Psoas muscle (tissue), 8 donors: ENCODE measurements at regions of chr2 and their contacts with region 1.

Region 1: GRCh38 chr2:48248241-48248933 is 281.6 kb upstream of the STON1 start:
- DNase-seq: no peak
- ATAC-seq: peak; percentile 90 to 94 (median 92)
- H3K4me3 ChIP-seq: no peak overlapping the region
- H3K27ac ChIP-seq: peak overlapping the region; percentile 84
- H3K4me1 ChIP-seq: peaks cover 34% of the 10 kb centered on the region
- H3K27me3 ChIP-seq: no peaks in the 10 kb centered on the region
- CTCF ChIP-seq: no peak

Region 2: GRCh38 chr2:47520825-47521665 is 727.3 kb before region 1 on chr2:
- intact Hi-C with region 1: no loop called
- DNase-seq: peak; percentile 33 to 59
- ATAC-seq: peak; percentile 47 to 68 (median 60)
- H3K4me3 ChIP-seq: peak overlapping the region; percentile 63
- H3K27ac ChIP-seq: no peak overlapping the region
- H3K4me1 ChIP-seq: peaks cover 4% of the 10 kb centered on the region
- H3K27me3 ChIP-seq: peaks cover 0 to 11% (median 2%) of the 10 kb centered on the region in 3 donors
- CTCF ChIP-seq: no peak

Region 3: DNA sequence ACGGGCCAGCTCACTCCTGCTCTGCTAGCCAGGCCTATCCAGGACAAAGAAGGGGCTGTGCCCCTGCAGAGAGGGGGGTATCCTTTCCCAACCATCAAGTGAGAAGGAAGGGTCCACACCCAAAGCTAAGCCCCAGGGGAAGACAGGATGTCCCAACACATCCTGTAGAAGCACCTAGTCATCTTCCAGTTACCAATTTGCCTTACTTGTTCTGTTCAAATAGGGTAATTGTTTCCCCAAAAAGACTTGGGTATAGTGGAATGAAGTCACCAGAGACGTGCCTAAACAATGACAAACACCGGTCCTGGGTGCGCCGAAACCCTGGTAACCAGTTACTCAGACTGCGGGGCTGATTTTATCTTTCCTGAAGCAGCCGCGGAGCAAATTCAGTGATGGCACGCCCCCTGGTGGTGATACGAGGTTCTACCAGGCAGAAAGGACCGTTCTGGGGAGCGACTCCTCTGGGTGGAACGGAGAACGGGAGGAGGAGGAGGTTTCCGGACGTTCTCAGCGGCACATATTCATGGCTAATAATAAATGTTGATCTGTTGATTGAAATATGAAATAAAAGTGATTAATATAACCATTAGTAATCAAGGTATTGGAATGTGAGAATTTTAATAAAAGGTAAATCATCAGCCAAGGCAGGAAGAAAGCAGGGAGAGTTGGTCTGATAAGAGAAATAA is 172.3 kb after region 1 on chr2:
- intact Hi-C with region 1: loop called in 1 of 2 experiments (anchors 10 kb)
- DNase-seq: peak; percentile 86 to 91
- ATAC-seq: peak; percentile 87 to 98 (median 93)
- H3K4me3 ChIP-seq: peak overlapping the region; percentile 24
- H3K27ac ChIP-seq: no peak overlapping the region
- H3K4me1 ChIP-seq: peaks cover 8% of the 10 kb centered on the region
- H3K27me3 ChIP-seq: no peaks in the 10 kb centered on the region
- CTCF ChIP-seq: peak; percentile 98